ENCODE measurements at regions of chr12 and their contacts with region 1.

Region 1: GRCh38 chr12:92408072-92408900 is 262.6 kb upstream of the BTG1 start:
- DNase-seq: peak; percentile 69
- H3K4me3 Mint-ChIP-seq: no peak overlapping the region
- H3K27ac Mint-ChIP-seq: peak overlapping the region; percentile 9
- H3K4me1 Mint-ChIP-seq: peaks cover 40% of the 10 kb centered on the region
- H3K27me3 Mint-ChIP-seq: no peaks in the 10 kb centered on the region

Region 2: DNA sequence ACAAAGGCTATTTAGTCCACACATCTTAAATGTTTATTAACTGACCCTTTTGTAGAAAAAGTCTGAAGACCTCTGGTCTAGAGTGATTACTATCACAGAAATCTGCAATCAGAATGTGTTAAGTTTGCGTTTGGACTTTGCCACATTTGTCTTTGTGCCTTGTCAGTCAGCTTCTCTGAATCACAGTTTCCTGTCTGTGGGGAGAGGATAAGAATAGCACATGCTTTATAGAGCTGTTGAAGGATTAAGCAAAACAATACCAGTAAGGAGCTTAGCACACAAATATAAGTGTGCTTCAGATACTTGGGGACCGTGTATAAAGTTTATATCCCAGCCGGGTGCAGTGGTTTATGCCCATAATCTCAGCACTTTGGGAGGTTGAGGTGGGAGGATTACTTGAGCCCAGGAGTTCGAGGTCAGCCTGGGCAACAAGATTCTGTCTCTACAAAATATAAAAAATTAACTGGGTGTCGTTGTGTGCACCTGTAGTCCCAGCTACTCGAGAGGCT is 199.6 kb before region 1 on chr12:
- CTCF ChIA-PET with region 1: interaction called, 14 read pairs
- POLR2A ChIA-PET with region 1: interaction called, 12 read pairs
- DNase-seq: peak; percentile 35
- H3K4me3 Mint-ChIP-seq: peak overlapping the region; percentile 53
- H3K27ac Mint-ChIP-seq: peak overlapping the region; percentile 90
- H3K4me1 Mint-ChIP-seq: peaks cover 36% of the 10 kb centered on the region
- H3K27me3 Mint-ChIP-seq: no peaks in the 10 kb centered on the region

Region 3: GRCh38 chr12:92419201-92419600 is 10.9 kb after region 1 on chr12:
- CTCF ChIA-PET with region 1: interaction called, 10 read pairs
- POLR2A ChIA-PET with region 1: interaction called, 4 read pairs
- DNase-seq: no peak
- H3K4me3 Mint-ChIP-seq: no peak overlapping the region
- H3K27ac Mint-ChIP-seq: no peak overlapping the region
- H3K4me1 Mint-ChIP-seq: peaks cover 9% of the 10 kb centered on the region
- H3K27me3 Mint-ChIP-seq: no peaks in the 10 kb centered on the region

Region 4: GRCh38 chr12:92539113-92539749 is 130.9 kb after region 1 on chr12:
- CTCF ChIA-PET with region 1: no interaction called
- POLR2A ChIA-PET with region 1: interaction called, 11 read pairs
- DNase-seq: peak; percentile 39
- H3K4me3 Mint-ChIP-seq: no peak overlapping the region
- H3K27ac Mint-ChIP-seq: peak overlapping the region; percentile 94
- H3K4me1 Mint-ChIP-seq: peaks cover 68% of the 10 kb centered on the region
- H3K27me3 Mint-ChIP-seq: no peaks in the 10 kb centered on the region

Region 5: DNA sequence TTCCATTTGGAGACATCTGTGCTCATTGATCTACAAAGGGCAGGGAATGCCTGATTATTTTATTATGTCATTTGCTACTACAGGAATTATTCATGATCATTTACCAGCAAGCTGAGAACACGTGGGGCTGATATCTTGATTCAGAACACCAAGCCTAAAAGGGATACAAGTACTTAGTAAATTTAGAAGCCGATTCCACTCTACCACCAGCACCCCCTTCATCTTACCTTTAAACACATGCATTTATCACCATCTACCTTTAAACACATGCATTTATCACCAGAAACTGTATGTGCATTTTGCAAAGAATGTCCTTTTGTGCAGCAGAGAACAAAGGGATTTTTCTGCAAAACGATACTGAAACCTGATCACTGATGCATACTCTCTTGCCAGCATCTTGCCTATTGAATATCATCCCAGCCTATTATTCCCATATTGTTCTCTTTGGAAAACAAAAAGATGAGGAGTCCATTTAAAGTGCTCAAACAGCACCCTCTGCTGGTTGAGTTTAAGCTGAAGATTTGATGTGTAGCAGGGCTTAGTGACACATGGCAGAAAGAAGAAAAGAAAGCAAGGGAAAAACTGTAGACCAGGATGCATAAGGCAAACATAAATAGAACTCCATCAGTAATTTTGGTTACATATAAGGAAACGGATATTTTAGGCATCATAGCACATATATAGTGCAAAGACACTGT is 161.9 kb after region 1 on chr12:
- CTCF ChIA-PET with region 1: interaction called, 10 read pairs
- POLR2A ChIA-PET with region 1: interaction called, 6 read pairs
- DNase-seq: peak; percentile 39
- H3K4me3 Mint-ChIP-seq: no peak overlapping the region
- H3K27ac Mint-ChIP-seq: no peak overlapping the region
- H3K4me1 Mint-ChIP-seq: peaks cover 22% of the 10 kb centered on the region
- H3K27me3 Mint-ChIP-seq: no peaks in the 10 kb centered on the region

Measured in activated CD4-positive, alpha-beta memory T cell treated with anti-CD3 and anti-CD28 coated beads, Interleukin-2, amount 10 ng/mL, durations not matched to agents 7 days and 5 days (primary cell).